ENCODE measurements at regions of chr3 and their contacts with region 1.

Region 1: DNA sequence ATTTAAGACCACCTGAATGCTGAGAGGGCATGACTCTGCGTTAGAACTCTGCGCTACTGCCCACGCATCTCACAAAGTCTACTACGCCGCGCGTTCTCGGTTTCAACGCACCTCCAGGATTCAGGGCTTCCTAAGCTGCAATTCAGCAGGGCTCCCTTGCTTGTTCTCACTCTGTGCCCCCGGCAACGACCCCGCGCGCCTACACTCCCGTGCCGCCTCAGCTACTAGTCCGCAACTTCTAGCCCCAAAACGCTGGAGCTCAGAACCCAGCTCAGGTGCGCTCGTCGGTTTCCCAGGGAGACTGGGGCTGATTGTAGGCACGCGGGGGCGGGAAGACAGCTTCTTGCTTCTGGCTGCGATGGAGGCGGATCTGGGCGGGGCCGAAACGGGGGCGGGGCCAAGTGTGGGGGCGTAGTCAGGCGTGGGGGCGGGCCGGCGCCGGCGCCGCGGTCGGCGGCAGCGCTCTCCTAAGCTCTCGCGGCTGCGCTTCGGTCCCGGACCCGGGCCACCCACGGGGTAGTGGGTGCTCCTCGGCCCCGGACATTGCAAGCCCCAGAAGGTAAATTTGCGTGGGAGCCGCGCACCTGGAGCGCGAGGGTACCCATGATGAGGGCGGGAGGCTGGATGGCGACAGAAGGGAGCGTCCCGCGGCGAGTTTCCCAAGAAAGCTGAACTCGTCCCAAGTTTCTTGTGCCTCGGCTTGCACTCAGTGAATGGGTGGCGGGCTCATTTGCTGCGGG is at the start of gene ARHGEF26:
- DNase-seq: peak; percentile 93
- ATAC-seq: peak; percentile 82
- H3K4me3 Mint-ChIP-seq: peak within 1 kb of the TSS; percentile 83
- H3K27ac Mint-ChIP-seq: peak within 1 kb of the TSS; percentile 72
- H3K4me1 Mint-ChIP-seq: peaks cover 29% of the 10 kb centered on the region
- H3K27me3 Mint-ChIP-seq: peaks cover 32% of the 10 kb centered on the region
- CTCF ChIP-seq: no peak
- total RNA-seq, gene ARHGEF26: 12.8 to 15.3 TPM (median 14.1 TPM) in 3 replicates

Region 2: DNA sequence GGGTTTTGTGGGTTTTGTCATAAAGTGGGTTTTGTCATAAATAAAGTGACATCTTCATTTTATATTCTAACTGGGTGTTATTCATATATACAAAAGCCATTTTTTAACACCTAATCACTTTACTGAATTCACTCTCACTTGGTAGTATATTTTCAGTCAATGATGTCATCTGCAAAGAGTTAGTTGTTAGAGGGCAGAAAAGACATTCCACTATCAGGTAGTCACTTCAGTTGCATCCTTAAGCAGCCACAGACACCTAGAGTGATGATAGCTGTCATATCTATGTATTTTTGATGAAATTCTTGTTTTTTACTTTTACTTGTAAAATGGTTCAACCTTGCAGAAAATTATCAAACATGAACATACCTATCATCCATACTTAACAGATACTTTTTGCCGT is 114.2 kb after region 1 on chr3:
- CTCF ChIA-PET with region 1: interaction called, 11 read pairs
- POLR2A ChIA-PET with region 1: no interaction called
- DNase-seq: no peak
- ATAC-seq: no peak
- H3K4me3 Mint-ChIP-seq: no peak overlapping the region
- H3K27ac Mint-ChIP-seq: no peak overlapping the region
- H3K4me1 Mint-ChIP-seq: no peaks in the 10 kb centered on the region
- H3K27me3 Mint-ChIP-seq: no peaks in the 10 kb centered on the region
- CTCF ChIP-seq: no peak

Measured in WTC11 (cell line).